ENCODE measurements at regions of chr1 and their contacts with region 1.

Region 1: GRCh38 chr1:214404154-214404553 is 123.2 kb downstream of the SMYD2 start:
- DNase-seq: no peak
- H3K4me3 Mint-ChIP-seq: no peak overlapping the region
- H3K27ac Mint-ChIP-seq: peak overlapping the region; percentile 82
- H3K4me1 Mint-ChIP-seq: peaks cover 48% of the 10 kb centered on the region
- H3K27me3 Mint-ChIP-seq: no peaks in the 10 kb centered on the region

Region 2: GRCh38 chr1:214321705-214322453 is 82.3 kb before region 1 on chr1:
- intact Hi-C with region 1: no loop called
- DNase-seq: no peak
- H3K4me3 Mint-ChIP-seq: no peak overlapping the region
- H3K27ac Mint-ChIP-seq: no peak overlapping the region
- H3K4me1 Mint-ChIP-seq: peaks cover 2% of the 10 kb centered on the region
- H3K27me3 Mint-ChIP-seq: no peaks in the 10 kb centered on the region

Region 3: DNA sequence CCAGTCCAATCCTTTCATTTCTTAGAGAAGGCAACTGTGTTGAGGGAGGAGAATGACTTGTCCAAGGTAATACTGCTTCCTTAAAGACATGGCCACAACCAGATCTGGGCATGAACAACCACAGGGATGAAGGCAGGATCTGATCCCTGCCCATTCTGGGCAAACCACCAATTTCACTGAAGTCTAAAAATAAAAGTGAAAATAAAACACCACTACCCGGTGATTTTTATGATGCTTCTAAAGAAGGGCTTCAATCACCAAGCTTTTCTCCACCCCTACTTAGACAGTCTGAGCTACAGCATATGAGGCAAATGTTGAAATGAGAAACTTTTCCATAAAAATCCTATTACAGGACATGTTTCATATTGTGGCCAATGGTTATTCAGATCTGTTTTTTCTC is 14.2 kb after region 1 on chr1:
- intact Hi-C with region 1: loop called (anchors 1 kb)
- DNase-seq: no peak
- H3K4me3 Mint-ChIP-seq: peak overlapping the region; percentile 75
- H3K27ac Mint-ChIP-seq: peak overlapping the region; percentile 95
- H3K4me1 Mint-ChIP-seq: peaks cover 82% of the 10 kb centered on the region
- H3K27me3 Mint-ChIP-seq: no peaks in the 10 kb centered on the region

Measured in activated T-helper 2 cell treated with anti-CD3 and anti-CD28 coated beads, Interferon-gamma antibody, Interleukin-2, Interleukin-4, amounts not matched to agents 10 μg/mL and 5 μg/mL and 100 μg/mL, durations not matched to agents 14 hours and 24 hours and 36 hours (primary cell).